CD4-positive, alpha-beta memory T cell (primary cell): ENCODE measurements at regions of chr7 and their contacts with region 1.

Region 1: DNA sequence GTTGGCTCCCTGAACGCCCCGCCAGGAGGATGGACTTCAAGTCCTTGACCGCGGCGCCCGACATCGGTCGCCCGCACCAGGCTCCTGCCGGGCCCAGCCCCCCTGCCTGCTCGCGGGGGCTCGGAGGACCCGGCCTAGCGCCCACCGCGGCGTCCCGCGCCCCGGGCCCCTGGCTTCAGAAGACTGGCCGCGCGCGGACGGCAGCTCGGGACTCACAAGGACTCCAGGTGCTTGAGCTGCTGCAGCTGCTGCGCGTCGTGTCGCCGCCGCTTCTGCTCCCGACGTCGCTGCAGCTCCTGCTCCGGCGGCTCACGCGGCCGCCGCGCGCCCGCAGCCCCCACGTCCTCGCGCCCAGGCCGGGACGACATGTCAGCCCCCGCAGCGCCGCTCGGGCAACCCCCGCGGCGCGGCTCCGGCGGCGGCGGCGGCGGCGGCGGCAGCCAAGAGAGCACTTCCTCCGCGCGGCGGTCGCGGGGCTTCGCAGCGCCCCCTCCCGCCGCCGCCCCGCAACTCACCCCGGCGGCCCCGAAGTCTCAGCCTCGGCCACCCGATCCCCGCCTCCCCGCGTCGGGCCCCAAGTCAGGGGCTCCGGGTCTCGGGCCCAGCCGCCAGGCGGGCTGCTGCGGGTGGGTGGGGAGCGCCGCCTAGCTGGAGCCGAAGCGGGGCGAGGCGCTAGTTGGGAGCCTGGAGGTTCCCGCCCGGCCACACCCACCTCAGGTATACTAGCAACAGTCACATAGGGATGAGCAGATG is at the start of gene RP9:
- DNase-seq: peak; percentile 74 to 83 (median 78)
- H3K4me3 ChIP-seq: peak within 1 kb of the TSS; percentile 25 to 59
- H3K4me3 Mint-ChIP-seq: peak within 1 kb of the TSS; percentile 78 to 95 (median 86)
- H3K27ac ChIP-seq: peak within 1 kb of the TSS; percentile 80
- H3K27ac Mint-ChIP-seq: peak within 1 kb of the TSS; percentile 49 to 93 (median 81)
- H3K4me1 ChIP-seq: peaks cover 38% of the 10 kb centered on the region
- H3K4me1 Mint-ChIP-seq: peaks cover 21 to 49% (median 36%) of the 10 kb centered on the region in 4 donors
- H3K27me3 ChIP-seq: no peaks in the 10 kb centered on the region
- H3K27me3 Mint-ChIP-seq: peaks cover 6 to 8% of the 10 kb centered on the region in 2 donors
- total RNA-seq, gene RP9: 17.5 to 17.7 TPM

Region 2: GRCh38 chr7:32410545-32410944 is 698.6 kb before region 1 on chr7:
- CTCF ChIA-PET with region 1: no interaction called
- POLR2A ChIA-PET with region 1: no interaction called
- intact Hi-C with region 1: no loop called
- DNase-seq: no peak
- H3K4me3 ChIP-seq: no peak overlapping the region
- H3K4me3 Mint-ChIP-seq: no peak overlapping the region
- H3K27ac ChIP-seq: no peak overlapping the region
- H3K27ac Mint-ChIP-seq: no peak overlapping the region
- H3K4me1 ChIP-seq: no peaks in the 10 kb centered on the region
- H3K4me1 Mint-ChIP-seq: no peaks in the 10 kb centered on the region
- H3K27me3 ChIP-seq: no peaks in the 10 kb centered on the region
- H3K27me3 Mint-ChIP-seq: peaks cover 3 to 10% of the 10 kb centered on the region in 2 donors

Region 3: DNA sequence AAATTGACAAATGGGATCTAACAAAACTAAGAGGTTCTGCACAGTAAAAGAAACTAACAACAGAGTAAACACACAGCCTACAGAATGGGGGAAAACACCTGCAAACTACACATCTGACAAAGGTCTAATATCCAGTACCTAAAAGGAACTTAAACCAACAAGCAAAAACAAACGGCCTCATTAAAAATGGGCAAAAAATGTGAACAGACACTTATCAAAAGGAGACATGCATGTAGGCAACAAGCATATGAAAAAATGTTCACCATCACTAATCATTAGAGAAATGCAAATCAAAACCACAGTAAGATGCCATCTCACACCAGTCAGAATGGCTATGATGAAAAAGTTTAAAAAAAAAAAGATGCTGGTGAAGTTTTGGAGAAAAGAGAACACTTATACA is 415.0 kb before region 1 on chr7:
- CTCF ChIA-PET with region 1: interaction called, 4 read pairs
- POLR2A ChIA-PET with region 1: no interaction called
- intact Hi-C with region 1: loop called (anchors 5 kb)
- DNase-seq: no peak
- H3K4me3 ChIP-seq: no peak overlapping the region
- H3K4me3 Mint-ChIP-seq: no peak overlapping the region
- H3K27ac ChIP-seq: no peak overlapping the region
- H3K27ac Mint-ChIP-seq: no peak overlapping the region
- H3K4me1 ChIP-seq: no peaks in the 10 kb centered on the region
- H3K4me1 Mint-ChIP-seq: peaks cover 1 to 11% (median 7%) of the 10 kb centered on the region in 4 donors
- H3K27me3 ChIP-seq: no peaks in the 10 kb centered on the region
- H3K27me3 Mint-ChIP-seq: peaks cover 0 to 7% of the 10 kb centered on the region in 2 donors

Region 4: DNA sequence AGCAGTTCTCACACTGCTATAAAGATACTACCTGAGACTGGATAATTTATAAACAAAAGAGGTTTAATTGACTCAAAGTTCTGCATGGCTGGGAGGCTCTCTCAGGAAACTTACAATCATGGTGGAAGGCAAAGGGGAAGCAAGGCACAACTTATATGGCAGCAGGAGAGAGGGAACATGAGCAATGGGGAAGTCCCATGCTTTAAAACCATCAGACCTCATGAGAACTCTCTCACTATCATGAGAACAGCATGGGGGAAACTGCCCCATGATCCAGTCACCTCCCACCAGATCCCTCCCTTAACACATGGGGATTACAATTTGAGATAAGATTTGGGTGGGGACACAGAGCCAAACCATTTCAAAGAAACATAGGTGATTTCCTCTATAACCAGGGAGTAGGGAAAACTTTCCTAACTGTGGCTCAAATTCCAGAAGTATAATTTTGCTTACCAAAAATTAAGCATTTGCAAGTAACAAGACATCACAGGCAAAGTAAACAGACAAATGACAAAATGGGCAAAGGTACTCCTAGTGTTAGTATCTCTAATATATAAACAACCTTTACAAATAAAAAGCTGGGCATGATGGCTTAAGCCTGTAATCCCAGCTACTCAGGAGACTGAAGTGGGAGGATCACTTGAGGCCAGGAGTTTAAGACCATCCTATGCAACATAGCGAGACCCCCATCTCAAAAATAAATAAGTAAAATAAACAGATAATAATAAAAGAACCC is 305.6 kb before region 1 on chr7:
- CTCF ChIA-PET with region 1: interaction called, 5 read pairs
- POLR2A ChIA-PET with region 1: no interaction called
- intact Hi-C with region 1: loop called (anchors 2 kb)
- DNase-seq: no peak
- H3K4me3 ChIP-seq: no peak overlapping the region
- H3K4me3 Mint-ChIP-seq: no peak overlapping the region
- H3K27ac ChIP-seq: no peak overlapping the region
- H3K27ac Mint-ChIP-seq: no peak overlapping the region
- H3K4me1 ChIP-seq: no peaks in the 10 kb centered on the region
- H3K4me1 Mint-ChIP-seq: no peaks in the 10 kb centered on the region
- H3K27me3 ChIP-seq: no peaks in the 10 kb centered on the region
- H3K27me3 Mint-ChIP-seq: peaks cover 0 to 1% of the 10 kb centered on the region in 2 donors

Region 5: GRCh38 chr7:32942786-32943653 is 166.2 kb before region 1 on chr7:
- CTCF ChIA-PET with region 1: interaction called, 5 read pairs
- POLR2A ChIA-PET with region 1: interaction called, 7 read pairs
- intact Hi-C with region 1: loop called (anchors 10 kb)
- DNase-seq: peak; percentile 51 to 70 (median 63)
- H3K4me3 ChIP-seq: peak overlapping the region; percentile 8 to 62
- H3K4me3 Mint-ChIP-seq: peak overlapping the region; percentile 68 to 88 (median 76)
- H3K27ac ChIP-seq: peak overlapping the region; percentile 32
- H3K27ac Mint-ChIP-seq: peak overlapping the region in 3 of 7 donors; percentile 17 to 48 (median 35)
- H3K4me1 ChIP-seq: peaks cover 9% of the 10 kb centered on the region
- H3K4me1 Mint-ChIP-seq: peaks cover 5 to 11% (median 7%) of the 10 kb centered on the region in 4 donors
- H3K27me3 ChIP-seq: no peaks in the 10 kb centered on the region
- H3K27me3 Mint-ChIP-seq: peaks cover 2 to 5% of the 10 kb centered on the region in 2 donors

Region 6: DNA sequence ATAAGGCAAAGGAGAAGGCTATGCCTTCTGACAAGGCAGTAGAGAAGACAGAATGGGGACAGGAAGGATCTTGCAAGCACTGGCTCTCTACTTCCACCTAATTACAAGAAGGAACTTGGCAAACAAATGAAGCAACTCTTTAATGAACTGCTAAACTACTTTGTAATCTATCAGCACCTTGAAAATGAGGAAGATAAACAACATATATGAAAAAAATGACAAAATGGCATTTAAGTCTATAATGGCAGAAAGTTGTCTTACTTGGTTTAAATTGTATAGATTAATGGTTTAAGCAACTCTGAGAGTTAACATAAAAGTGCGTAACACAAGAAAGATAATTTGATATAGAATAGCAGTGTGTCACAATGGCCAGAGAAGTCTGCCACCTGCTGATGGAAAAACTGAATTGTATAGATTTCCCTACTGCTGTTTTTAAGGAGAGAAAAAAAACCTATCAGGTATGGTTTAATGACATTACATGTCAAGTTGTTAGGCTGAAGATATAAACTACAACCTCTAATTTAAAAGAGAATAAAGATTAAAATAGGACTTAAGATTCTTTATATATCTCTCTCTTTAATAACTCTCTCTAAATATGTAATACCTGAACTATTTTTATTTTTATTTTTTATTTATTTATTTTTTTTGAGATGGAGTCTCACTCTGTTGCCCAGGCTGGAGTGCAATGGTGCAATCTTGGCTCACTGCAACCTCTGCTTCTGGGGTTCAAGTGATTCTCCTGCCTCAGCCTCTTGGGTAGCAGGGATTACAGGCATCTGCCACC is 58.5 kb before region 1 on chr7:
- CTCF ChIA-PET with region 1: interaction called, 15 read pairs
- POLR2A ChIA-PET with region 1: interaction called, 8 read pairs
- intact Hi-C with region 1: no loop called
- DNase-seq: peak; percentile 41 to 61 (median 55)
- H3K4me3 ChIP-seq: no peak overlapping the region
- H3K4me3 Mint-ChIP-seq: peak overlapping the region in 1 of 8 donors; percentile 1
- H3K27ac ChIP-seq: no peak overlapping the region
- H3K27ac Mint-ChIP-seq: peak overlapping the region in 4 of 7 donors; percentile 10 to 39 (median 29)
- H3K4me1 ChIP-seq: peaks cover 50% of the 10 kb centered on the region
- H3K4me1 Mint-ChIP-seq: peaks cover 28 to 70% (median 47%) of the 10 kb centered on the region in 4 donors
- H3K27me3 ChIP-seq: no peaks in the 10 kb centered on the region
- H3K27me3 Mint-ChIP-seq: no peaks in the 10 kb centered on the region

Region 7: GRCh38 chr7:33072471-33072870 is 36.7 kb before region 1 on chr7:
- CTCF ChIA-PET with region 1: interaction called, 16 read pairs
- POLR2A ChIA-PET with region 1: interaction called, 3 read pairs
- intact Hi-C with region 1: no loop called
- DNase-seq: no peak
- H3K4me3 ChIP-seq: no peak overlapping the region
- H3K4me3 Mint-ChIP-seq: no peak overlapping the region
- H3K27ac ChIP-seq: no peak overlapping the region
- H3K27ac Mint-ChIP-seq: no peak overlapping the region
- H3K4me1 ChIP-seq: peaks cover 13% of the 10 kb centered on the region
- H3K4me1 Mint-ChIP-seq: peaks cover 10 to 16% (median 12%) of the 10 kb centered on the region in 4 donors
- H3K27me3 ChIP-seq: no peaks in the 10 kb centered on the region
- H3K27me3 Mint-ChIP-seq: peaks cover 5% of the 10 kb centered on the region in 2 donors

Region 8: GRCh38 chr7:33143996-33144718 is 35.0 kb after region 1 on chr7:
- CTCF ChIA-PET with region 1: interaction called, 10 read pairs
- POLR2A ChIA-PET with region 1: no interaction called
- intact Hi-C with region 1: no loop called
- DNase-seq: no peak
- H3K4me3 ChIP-seq: no peak overlapping the region
- H3K4me3 Mint-ChIP-seq: no peak overlapping the region
- H3K27ac ChIP-seq: no peak overlapping the region
- H3K27ac Mint-ChIP-seq: no peak overlapping the region
- H3K4me1 ChIP-seq: no peaks in the 10 kb centered on the region
- H3K4me1 Mint-ChIP-seq: peaks cover 0 to 12% (median 7%) of the 10 kb centered on the region in 4 donors
- H3K27me3 ChIP-seq: no peaks in the 10 kb centered on the region
- H3K27me3 Mint-ChIP-seq: no peaks in the 10 kb centered on the region

Region 9: DNA sequence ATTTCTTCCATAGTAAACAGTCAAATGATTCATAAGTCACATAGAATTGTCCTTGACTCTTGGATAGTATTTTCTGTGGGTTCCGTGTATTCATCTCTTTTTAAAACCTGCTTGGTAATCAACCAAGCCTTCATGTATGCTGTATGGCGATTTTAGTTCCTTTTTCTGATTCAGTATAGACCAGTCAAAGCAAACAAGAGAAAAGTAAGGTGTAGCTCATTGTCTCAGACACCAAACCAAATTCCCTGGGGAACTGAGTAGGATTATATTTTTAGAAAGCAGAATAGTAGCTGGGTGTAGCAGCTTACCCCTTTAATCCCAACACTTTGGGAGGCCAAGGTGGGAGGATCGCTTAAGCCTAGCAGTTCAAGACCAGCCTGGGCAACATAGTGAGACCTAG is 260.7 kb after region 1 on chr7:
- CTCF ChIA-PET with region 1: no interaction called
- POLR2A ChIA-PET with region 1: no interaction called
- intact Hi-C with region 1: no loop called
- DNase-seq: no peak
- H3K4me3 ChIP-seq: no peak overlapping the region
- H3K4me3 Mint-ChIP-seq: no peak overlapping the region
- H3K27ac ChIP-seq: no peak overlapping the region
- H3K27ac Mint-ChIP-seq: no peak overlapping the region
- H3K4me1 ChIP-seq: no peaks in the 10 kb centered on the region
- H3K4me1 Mint-ChIP-seq: no peaks in the 10 kb centered on the region
- H3K27me3 ChIP-seq: no peaks in the 10 kb centered on the region
- H3K27me3 Mint-ChIP-seq: no peaks in the 10 kb centered on the region